ENCODE measurements at regions of chr17 and their contacts with region 1.

Region 1: DNA sequence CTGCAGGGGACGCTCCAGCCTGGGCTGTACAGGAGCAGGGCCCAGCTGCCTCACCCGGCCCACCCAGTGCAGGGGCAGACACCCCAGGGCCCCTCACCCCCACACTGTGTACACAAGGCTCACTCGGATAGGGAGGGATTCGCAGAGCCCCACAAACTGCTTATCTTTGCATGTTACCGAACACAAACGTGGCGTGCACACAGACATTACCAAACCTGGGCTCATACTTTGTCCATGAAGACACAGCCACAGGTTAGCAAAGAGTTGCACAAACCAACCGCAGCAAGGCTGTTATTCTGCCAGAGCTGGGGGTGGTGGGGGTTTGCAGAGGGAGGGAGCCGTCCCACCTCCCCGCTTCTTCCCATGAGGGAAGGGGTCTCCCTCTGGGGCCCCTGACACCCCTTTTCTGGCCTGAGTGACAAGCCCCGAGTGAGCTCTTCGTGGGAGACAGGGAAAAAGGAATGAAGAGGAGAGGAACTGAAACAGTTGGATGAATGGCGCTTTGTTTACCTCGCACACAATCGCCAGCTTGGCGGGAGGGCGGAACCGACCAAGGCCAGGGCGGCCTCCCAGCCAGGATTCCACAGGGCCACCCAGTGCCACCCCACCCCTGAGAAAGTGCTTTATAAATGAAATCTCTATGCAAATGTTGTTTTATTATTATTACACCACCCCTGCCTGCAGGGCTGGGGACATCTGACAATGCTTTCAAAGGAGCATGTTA is 434 bp upstream of the CPSF4L start:
- DNase-seq: peak; percentile 93
- ATAC-seq: peak; percentile 90
- H3K4me3 ChIP-seq: peak overlapping the region; percentile 54 to 75 (median 63)
- H3K27ac ChIP-seq: peak overlapping the region; percentile 98
- H3K4me1 ChIP-seq: peaks cover 74% of the 10 kb centered on the region
- H3K27me3 ChIP-seq: no peaks in the 10 kb centered on the region
- CTCF ChIP-seq: peak; percentile 78
- EP300 ChIP-seq: peak; percentile 62 to 73; a peak in 2 of 4 replicates
- POLR2A ChIP-seq: peak; percentile 62 to 87
- RAD21 ChIP-seq: peak; percentile 82

Region 2: GRCh38 chr17:72421128-72422092 is 840.7 kb before region 1 on chr17:
- CTCF ChIA-PET with region 1: no interaction called
- POLR2A ChIA-PET with region 1: no interaction called
- in situ Hi-C with region 1: no loop called
- intact Hi-C with region 1: no loop called
- DNase-seq: peak; percentile 99
- ATAC-seq: peak; percentile 91
- H3K4me3 ChIP-seq: peak overlapping the region in 1 of 3 experiments; percentile 31; a peak in 2 of 6 replicates
- H3K27ac ChIP-seq: peak overlapping the region; percentile 83
- H3K4me1 ChIP-seq: peaks cover 86% of the 10 kb centered on the region
- H3K27me3 ChIP-seq: no peaks in the 10 kb centered on the region
- CTCF ChIP-seq: no peak
- EP300 ChIP-seq: peak in 1 of 2 experiments; percentile 92; a peak in 3 of 4 replicates
- POLR2A ChIP-seq: peak; percentile 48 to 68
- RAD21 ChIP-seq: peak; percentile 34

Region 3: DNA sequence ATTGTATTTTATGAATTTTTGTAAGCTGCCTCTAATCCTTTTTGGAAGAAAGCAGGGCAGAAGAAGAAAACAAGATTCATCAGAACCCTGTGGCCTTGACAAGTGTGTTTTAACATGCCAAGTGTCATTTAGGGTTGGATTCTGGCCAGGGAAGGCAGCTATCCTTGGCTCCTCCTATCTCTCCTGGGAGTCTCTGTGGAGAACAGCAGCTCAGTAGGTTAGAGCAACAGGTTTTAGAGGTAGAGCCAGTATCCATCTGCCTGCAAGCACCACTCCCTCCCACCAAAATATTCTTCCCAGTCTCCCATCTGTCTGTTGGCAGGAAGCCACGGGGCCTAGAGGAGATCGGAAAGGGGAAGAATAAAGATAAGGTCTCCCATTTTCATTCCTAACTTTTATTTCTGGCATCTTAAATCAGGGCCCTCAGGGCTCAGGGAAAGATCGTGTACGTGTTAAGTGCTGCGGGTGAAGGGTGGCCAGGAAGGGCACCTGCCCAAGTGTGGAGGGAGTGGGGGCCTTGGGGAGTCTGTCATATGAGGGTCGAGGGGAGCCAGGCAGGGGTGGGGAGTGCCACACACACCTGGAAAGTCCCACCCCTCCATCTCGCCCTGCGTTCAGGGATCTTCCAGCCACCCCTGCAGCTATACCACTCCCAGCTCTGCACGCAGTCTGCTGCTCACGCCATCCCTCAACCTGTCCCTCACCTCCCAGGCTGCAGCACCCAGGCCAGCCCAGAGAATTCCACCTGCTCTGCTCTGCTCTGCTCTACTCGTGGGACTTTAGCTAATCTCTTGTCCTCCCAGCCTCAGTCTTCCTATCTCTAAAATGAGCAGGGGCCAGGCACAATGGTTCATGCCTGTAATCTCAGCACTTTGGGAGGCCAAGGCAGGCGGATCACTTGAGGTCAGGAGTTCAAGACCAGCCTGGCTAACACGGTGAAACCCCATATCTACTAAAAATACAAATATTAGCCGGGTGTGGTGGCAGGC is 16.6 kb after region 1 on chr17:
- CTCF ChIA-PET with region 1: no interaction called
- POLR2A ChIA-PET with region 1: interaction called, 24 read pairs
- in situ Hi-C with region 1: no loop called
- intact Hi-C with region 1: loop called (anchors 1 kb)
- DNase-seq: no peak
- ATAC-seq: peak; percentile 60
- H3K4me3 ChIP-seq: peak overlapping the region in 1 of 3 experiments; percentile 7; a peak in 1 of 6 replicates
- H3K27ac ChIP-seq: peak overlapping the region; percentile 74
- H3K4me1 ChIP-seq: peaks cover 48% of the 10 kb centered on the region
- H3K27me3 ChIP-seq: no peaks in the 10 kb centered on the region
- CTCF ChIP-seq: no peak
- EP300 ChIP-seq: no peak
- POLR2A ChIP-seq: no peak
- RAD21 ChIP-seq: no peak

Region 4: DNA sequence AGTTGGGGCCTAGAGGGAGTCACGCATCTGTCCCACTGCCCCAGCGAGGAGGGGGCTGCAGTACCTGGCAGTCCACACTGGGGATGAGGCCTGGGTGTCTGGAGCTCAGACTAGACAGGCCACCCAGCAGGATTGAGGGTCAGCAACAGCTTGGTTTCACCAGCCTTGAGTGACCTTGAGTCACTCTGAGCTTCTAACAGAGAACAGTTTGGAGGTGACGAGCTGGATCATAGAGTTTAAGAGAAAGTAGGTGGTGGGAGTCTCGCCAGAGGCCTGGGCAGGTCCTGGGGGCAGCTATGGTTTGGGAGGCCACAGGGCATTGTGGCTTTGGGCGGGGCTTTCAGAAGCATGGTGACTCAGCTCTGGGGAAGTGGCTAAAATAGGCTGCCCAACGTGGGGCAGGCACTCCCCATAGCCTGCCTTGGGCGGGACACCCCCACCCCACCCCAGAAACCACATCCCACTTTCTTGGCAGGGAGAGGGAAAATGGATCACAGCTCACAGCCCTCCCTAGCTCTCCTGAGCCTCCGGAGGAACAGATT is 29.2 kb after region 1 on chr17:
- CTCF ChIA-PET with region 1: no interaction called
- POLR2A ChIA-PET with region 1: interaction called, 45 read pairs
- in situ Hi-C with region 1: no loop called
- intact Hi-C with region 1: loop called (anchors 1 kb)
- DNase-seq: no peak
- ATAC-seq: no peak
- H3K4me3 ChIP-seq: no peak overlapping the region; a peak in 1 of 6 replicates
- H3K27ac ChIP-seq: peak overlapping the region; percentile 15
- H3K4me1 ChIP-seq: peaks cover 95% of the 10 kb centered on the region
- H3K27me3 ChIP-seq: no peaks in the 10 kb centered on the region
- CTCF ChIP-seq: no peak; the same call in 1 of the 2 replicates
- EP300 ChIP-seq: no peak
- POLR2A ChIP-seq: no peak
- RAD21 ChIP-seq: no peak

Region 5: GRCh38 chr17:73365906-73366623 is 104.0 kb after region 1 on chr17:
- CTCF ChIA-PET with region 1: interaction called, 159 read pairs
- POLR2A ChIA-PET with region 1: interaction called, 22 read pairs
- in situ Hi-C with region 1: loop called (anchors 5 kb)
- intact Hi-C with region 1: no loop called
- DNase-seq: no peak
- ATAC-seq: no peak
- H3K4me3 ChIP-seq: no peak overlapping the region
- H3K27ac ChIP-seq: no peak overlapping the region
- H3K4me1 ChIP-seq: peaks cover 59% of the 10 kb centered on the region
- H3K27me3 ChIP-seq: peaks cover 22 to 82% of the 10 kb centered on the region in 2 experiments
- CTCF ChIP-seq: no peak
- EP300 ChIP-seq: no peak
- POLR2A ChIP-seq: no peak
- RAD21 ChIP-seq: no peak

Measured in HepG2 (cell line).